ENCODE measurements at regions of chr2 and their contacts with region 1.

Region 1: DNA sequence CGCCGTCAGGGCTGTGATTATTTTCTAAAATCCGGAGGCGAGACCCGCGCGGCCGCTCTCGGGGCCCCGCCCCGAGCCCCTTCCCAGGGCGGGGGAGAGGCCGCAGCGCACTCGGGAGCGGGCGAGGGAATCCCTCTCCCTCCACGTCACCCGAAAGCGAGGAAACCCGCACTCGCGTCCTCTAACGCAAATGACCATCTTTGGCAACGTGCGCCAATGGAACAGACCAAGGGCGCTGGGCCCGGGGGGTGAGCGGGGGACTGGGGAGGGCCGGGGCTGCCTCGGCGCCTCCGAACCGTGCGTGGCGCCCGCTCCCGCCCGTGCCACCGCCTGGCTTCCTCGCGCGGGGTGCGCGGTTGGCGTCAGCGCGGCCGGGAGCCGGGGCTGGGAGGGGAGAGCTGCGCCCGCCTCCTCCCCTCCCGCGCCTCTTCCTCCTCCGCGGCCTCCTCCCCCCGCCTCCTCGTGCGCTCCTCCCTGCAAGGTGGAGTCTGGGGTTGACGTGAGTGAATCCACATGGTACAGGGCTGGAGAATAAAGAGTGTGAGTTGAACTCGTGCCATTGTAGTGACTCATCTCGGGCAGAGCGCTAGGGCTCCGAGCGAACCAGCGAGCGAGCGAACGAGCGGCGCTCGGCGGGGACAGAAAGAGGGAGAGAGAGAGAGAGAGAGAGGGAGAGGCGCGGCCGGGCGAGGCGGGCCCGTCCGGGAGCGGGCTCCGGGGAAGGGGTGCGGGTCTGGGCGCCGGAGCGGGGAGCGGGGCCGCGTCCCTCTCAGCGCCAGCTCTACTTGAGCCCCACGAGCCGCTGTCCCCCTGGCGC is at the start of gene FOSL2:
- DNase-seq: peak; percentile 97
- H3K4me3 ChIP-seq: peak within 1 kb of the TSS; percentile 75 to 99 (median 88)
- H3K27ac ChIP-seq: peak within 1 kb of the TSS; percentile 100
- H3K4me1 ChIP-seq: peaks cover 7 to 31% (median 19%) of the 10 kb centered on the region in 4 donors
- H3K27me3 ChIP-seq: no peaks in the 10 kb centered on the region
- CTCF ChIP-seq: peak in 3 of 5 experiments; percentile 2 to 36 (median 8)
- EP300 ChIP-seq: peak; percentile 94
- POLR2A ChIP-seq: peak; percentile 100
- total RNA-seq, gene FOSL2: 135 to 358 (median 233) TPM

Region 2: GRCh38 chr2:27771548-27772335 is 620.8 kb before region 1 on chr2 and contains the start of gene MRPL33:
- in situ Hi-C with region 1: no loop called
- intact Hi-C with region 1: loop called (anchors 5 kb)
- DNase-seq: peak; percentile 96
- H3K4me3 ChIP-seq: peak within 1 kb of the TSS; percentile 80 to 94 (median 86)
- H3K27ac ChIP-seq: peak within 1 kb of the TSS; percentile 91 to 95 (median 93)
- H3K4me1 ChIP-seq: peaks cover 11 to 33% (median 15%) of the 10 kb centered on the region in 4 donors
- H3K27me3 ChIP-seq: no peaks in the 10 kb centered on the region
- CTCF ChIP-seq: no peak
- EP300 ChIP-seq: no peak
- POLR2A ChIP-seq: peak; percentile 79
- total RNA-seq, gene MRPL33: 7.2 to 89.4 (median 45.7) TPM

Region 3: DNA sequence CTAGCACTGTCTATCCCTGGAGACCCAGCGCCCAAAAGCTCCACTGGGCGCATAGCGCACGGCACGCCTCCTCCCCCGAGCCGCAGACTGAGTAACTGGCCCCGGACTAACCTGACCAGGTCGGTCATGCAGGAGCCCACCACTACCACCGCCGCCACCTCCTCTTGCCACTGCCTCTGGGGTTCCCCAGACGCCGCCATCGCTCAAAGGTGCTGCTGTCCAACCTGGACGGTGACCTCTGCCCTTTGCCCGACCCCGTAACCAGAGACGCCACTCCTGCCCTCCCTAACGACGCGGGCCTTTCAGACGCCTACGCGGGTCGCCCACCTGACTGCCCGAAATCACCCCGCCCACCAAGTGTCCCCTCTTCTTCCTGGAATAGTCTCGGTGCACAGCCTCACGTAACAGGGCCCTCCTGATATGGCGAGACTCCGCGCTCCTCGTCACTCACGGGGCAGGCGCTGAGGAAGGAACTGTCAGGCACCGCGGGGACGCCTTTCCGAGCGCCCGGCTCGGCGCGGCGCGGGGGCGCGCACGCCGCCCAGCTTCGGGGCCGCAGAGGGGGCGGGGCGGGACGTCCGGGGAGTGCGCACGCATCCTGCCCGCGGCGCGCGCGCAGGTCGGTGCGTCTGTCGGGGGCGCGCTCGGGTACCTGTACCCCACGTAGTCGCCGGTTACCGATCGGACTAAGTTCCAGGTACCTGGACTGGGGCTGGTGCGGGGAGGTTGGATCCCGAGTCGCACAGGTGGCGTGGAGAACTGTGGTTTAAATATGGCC is 502.2 kb before region 1 on chr2 and contains the starts of genes BABAM2 and RBKS:
- in situ Hi-C with region 1: no loop called
- intact Hi-C with region 1: loop called (anchors 2 kb)
- DNase-seq: peak; percentile 90
- H3K4me3 ChIP-seq: peak within 1 kb of the TSS; percentile 62 to 89 (median 78)
- H3K27ac ChIP-seq: peak within 1 kb of the TSS; percentile 93 to 96 (median 94)
- H3K4me1 ChIP-seq: peaks cover 4 to 59% (median 26%) of the 10 kb centered on the region in 4 donors
- H3K27me3 ChIP-seq: no peaks in the 10 kb centered on the region
- CTCF ChIP-seq: no peak
- EP300 ChIP-seq: peak; percentile 74
- POLR2A ChIP-seq: peak; percentile 83
- total RNA-seq, gene BABAM2: 33.3 to 48.9 (median 37.9) TPM
- total RNA-seq, gene RBKS: 1.5 to 15.2 (median 15.1) TPM in 3 of 4 donors, not detected in the other

Region 4: GRCh38 chr2:28164280-28164801 is 228.2 kb before region 1 on chr2:
- in situ Hi-C with region 1: no loop called
- intact Hi-C with region 1: loop called (anchors 10 kb)
- DNase-seq: no peak
- H3K4me3 ChIP-seq: no peak overlapping the region
- H3K27ac ChIP-seq: peak overlapping the region; percentile 62 to 68 (median 66)
- H3K4me1 ChIP-seq: peaks cover 19 to 33% (median 21%) of the 10 kb centered on the region in 4 donors
- H3K27me3 ChIP-seq: no peaks in the 10 kb centered on the region
- CTCF ChIP-seq: no peak
- EP300 ChIP-seq: no peak
- POLR2A ChIP-seq: no peak

Region 5: GRCh38 chr2:28300485-28301341 is 91.8 kb before region 1 on chr2:
- in situ Hi-C with region 1: no loop called
- intact Hi-C with region 1: loop called (anchors 5 kb)
- DNase-seq: no peak
- H3K4me3 ChIP-seq: no peak overlapping the region
- H3K27ac ChIP-seq: peak overlapping the region; percentile 65 to 86 (median 72)
- H3K4me1 ChIP-seq: peaks cover 0 to 12% (median 8%) of the 10 kb centered on the region in 4 donors
- H3K27me3 ChIP-seq: no peaks in the 10 kb centered on the region
- CTCF ChIP-seq: no peak
- EP300 ChIP-seq: peak; percentile 94
- POLR2A ChIP-seq: no peak

Region 6: GRCh38 chr2:28342081-28342967 is 50.2 kb before region 1 on chr2:
- in situ Hi-C with region 1: no loop called
- intact Hi-C with region 1: loop called (anchors 5 kb)
- DNase-seq: peak; percentile 47
- H3K4me3 ChIP-seq: no peak overlapping the region
- H3K27ac ChIP-seq: peak overlapping the region; percentile 26 to 68 (median 50)
- H3K4me1 ChIP-seq: peaks cover 6 to 39% (median 12%) of the 10 kb centered on the region in 4 donors
- H3K27me3 ChIP-seq: no peaks in the 10 kb centered on the region
- CTCF ChIP-seq: no peak
- EP300 ChIP-seq: no peak
- POLR2A ChIP-seq: no peak

Region 7: GRCh38 chr2:28495551-28496250 is 103.2 kb after region 1 on chr2 and contains the start of gene PLB1:
- in situ Hi-C with region 1: no loop called
- intact Hi-C with region 1: no loop called
- DNase-seq: no peak
- H3K4me3 ChIP-seq: no peak within 1 kb of the TSS
- H3K27ac ChIP-seq: no peak within 1 kb of the TSS
- H3K4me1 ChIP-seq: peaks cover 0 to 14% (median 4%) of the 10 kb centered on the region in 4 donors
- H3K27me3 ChIP-seq: no peaks in the 10 kb centered on the region
- CTCF ChIP-seq: no peak
- EP300 ChIP-seq: no peak
- POLR2A ChIP-seq: no peak
- total RNA-seq, gene PLB1: 0.20 to 4.2 (median 1.8) TPM

Region 8: GRCh38 chr2:28521663-28522062 is 129.2 kb after region 1 on chr2:
- in situ Hi-C with region 1: no loop called
- intact Hi-C with region 1: no loop called
- DNase-seq: no peak
- H3K4me3 ChIP-seq: no peak overlapping the region
- H3K27ac ChIP-seq: no peak overlapping the region
- H3K4me1 ChIP-seq: no peaks in the 10 kb centered on the region
- H3K27me3 ChIP-seq: peaks cover 12% of the 10 kb centered on the region
- CTCF ChIP-seq: no peak
- EP300 ChIP-seq: no peak
- POLR2A ChIP-seq: no peak